ENCODE measurements at regions of chr19 and their contacts with region 1.

Region 1: GRCh38 chr19:38245826-38246498 is 10.2 kb downstream of the PPP1R14A start:
- DNase-seq: no peak
- H3K4me3 ChIP-seq: no peak overlapping the region
- CTCF ChIP-seq: no peak

Region 2: DNA sequence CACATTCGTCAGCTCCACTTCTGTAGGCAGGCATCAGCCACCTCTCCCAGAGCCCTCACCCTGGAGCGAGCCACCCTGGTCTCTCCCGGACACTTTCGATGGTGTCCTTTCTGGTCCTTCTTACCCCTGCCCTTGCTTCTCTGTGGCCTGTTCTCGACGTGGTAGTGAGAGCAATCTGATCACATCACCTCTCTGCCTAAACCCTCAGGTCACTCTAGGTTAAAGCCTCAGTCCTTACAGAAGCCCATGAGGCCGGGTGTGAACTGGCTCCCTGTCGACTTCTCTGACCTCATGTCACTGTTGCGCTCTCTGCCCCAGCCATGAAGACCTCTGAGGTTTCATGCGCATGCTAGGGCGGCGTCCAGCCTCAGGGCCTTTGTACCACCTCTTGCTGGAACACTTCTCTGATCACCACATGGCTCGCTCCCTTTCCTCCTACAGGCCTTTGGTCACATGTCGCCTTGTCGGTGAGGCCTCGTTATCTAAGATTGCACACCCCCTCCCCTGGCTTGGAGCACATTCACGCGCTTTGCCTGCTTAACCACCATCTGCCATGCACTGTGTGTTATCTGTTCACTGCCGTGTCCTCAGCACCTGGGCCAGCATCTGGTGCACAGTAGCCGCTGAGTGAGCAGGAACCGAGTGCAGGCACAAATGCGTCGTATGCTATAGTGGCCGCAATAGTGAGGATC is 123.4 kb before region 1 on chr19:
- CTCF ChIA-PET with region 1: no interaction called
- POLR2A ChIA-PET with region 1: no interaction called
- DNase-seq: no peak
- H3K4me3 ChIP-seq: no peak overlapping the region
- CTCF ChIP-seq: no peak

Region 3: DNA sequence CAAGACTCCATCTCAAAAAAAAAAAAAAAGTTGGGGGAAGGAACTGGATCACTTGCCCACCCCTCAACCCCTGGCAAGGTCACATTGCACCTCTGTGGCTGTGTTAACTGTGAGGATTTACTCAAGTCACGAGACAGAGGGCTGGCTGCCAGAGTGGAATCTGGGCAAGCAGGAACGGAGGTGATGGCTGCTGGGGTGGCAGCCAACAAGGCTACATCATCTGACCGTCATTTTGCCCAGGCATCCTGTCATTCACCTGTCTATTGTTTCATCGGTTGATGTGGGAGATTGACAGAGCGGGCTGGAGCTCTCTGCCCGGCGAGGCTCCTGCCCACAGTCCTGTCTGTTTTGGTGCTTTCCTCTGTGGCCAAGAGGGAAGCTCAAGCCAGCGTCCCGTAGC is 97.6 kb before region 1 on chr19:
- CTCF ChIA-PET with region 1: no interaction called
- POLR2A ChIA-PET with region 1: no interaction called
- DNase-seq: no peak
- H3K4me3 ChIP-seq: no peak overlapping the region
- CTCF ChIP-seq: no peak

Region 4: GRCh38 chr19:38229585-38230073 is 16.3 kb before region 1 on chr19:
- CTCF ChIA-PET with region 1: interaction called, 93 read pairs
- POLR2A ChIA-PET with region 1: no interaction called
- DNase-seq: no peak
- H3K4me3 ChIP-seq: peak overlapping the region; percentile 62
- CTCF ChIP-seq: peak; percentile 18

Region 5: DNA sequence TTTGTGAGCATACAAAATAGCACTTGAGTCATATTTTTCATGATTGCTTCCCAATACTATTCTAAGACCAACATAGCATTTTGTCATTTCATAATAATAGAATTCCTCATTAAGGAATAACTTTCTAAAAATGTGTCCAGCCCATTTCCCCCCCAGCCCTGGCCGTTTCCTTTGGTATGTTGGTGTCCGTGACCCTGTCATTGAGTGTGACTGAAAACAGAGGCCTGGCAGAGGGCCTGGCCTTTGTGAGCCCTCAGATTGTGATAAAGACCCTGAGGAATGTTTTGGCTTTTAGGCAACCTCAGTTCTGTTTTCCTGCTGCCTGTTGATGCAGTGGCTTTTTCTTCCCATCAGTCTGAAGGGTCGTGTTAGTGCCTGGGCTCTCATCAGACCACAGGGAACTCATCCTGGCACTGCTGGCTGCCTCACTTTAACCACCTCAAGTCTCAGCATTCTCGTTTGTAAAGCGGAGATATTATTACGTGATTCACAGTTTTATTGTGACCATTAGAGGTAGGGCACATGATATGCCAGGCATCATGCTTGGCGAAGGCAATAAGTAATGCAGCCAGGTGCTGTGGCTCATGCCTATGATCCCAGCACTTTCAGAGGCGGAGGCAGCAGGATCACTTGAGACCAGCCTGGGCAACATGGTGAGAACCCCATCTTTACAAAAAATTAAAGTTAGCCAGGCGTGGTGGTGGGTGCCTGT is 32.2 kb after region 1 on chr19:
- CTCF ChIA-PET with region 1: interaction called, 17 read pairs
- POLR2A ChIA-PET with region 1: no interaction called
- DNase-seq: no peak
- H3K4me3 ChIP-seq: no peak overlapping the region
- CTCF ChIP-seq: no peak

Region 6: DNA sequence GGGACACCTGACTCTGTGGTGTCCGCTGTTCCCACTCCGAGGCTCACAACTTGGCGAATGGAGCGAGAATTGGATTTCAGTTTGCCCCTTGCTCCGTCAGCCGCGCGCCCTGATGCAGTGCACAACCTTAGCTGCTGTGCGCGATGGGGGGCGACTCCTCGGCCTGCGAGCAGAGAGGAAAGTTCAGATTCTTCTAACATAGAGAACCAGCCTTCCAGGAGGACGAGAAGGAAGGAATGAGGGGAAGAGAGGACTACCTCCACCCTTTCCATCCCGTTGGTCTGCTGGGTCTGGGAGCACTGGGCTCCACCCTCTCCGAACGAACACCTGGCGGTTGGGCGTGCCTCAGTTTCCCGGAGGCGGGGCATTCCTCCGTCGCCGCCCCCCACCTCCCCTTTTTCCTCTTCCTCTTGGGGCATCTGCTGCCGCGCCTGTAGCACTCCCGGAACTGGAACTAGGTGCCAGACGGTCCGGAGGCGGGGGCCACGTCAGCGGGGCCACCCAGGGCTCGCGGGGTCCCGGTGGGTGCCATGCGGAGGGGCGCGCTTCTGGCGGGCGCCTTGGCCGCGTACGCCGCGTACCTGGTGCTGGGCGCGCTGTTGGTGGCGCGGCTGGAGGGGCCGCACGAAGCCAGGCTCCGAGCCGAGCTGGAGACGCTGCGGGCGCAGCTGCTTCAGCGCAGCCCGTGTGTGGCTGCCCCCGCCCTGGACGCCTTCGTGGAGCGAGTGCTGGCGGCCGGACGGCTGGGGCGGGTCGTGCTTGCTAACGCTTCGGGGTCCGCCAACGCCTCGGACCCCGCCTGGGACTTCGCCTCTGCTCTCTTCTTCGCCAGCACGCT is 73.7 kb after region 1 on chr19 and contains the start of gene KCNK6:
- CTCF ChIA-PET with region 1: interaction called, 16 read pairs
- POLR2A ChIA-PET with region 1: no interaction called
- DNase-seq: no peak
- H3K4me3 ChIP-seq: peak within 1 kb of the TSS; percentile 64
- CTCF ChIP-seq: no peak

Region 7: GRCh38 chr19:38374429-38375176 is 128.6 kb after region 1 on chr19 and contains the start of gene PSMD8:
- CTCF ChIA-PET with region 1: interaction called, 45 read pairs
- POLR2A ChIA-PET with region 1: interaction called, 4 read pairs
- DNase-seq: peak; percentile 86
- H3K4me3 ChIP-seq: peak within 1 kb of the TSS; percentile 83
- CTCF ChIP-seq: peak; percentile 36

Region 8: DNA sequence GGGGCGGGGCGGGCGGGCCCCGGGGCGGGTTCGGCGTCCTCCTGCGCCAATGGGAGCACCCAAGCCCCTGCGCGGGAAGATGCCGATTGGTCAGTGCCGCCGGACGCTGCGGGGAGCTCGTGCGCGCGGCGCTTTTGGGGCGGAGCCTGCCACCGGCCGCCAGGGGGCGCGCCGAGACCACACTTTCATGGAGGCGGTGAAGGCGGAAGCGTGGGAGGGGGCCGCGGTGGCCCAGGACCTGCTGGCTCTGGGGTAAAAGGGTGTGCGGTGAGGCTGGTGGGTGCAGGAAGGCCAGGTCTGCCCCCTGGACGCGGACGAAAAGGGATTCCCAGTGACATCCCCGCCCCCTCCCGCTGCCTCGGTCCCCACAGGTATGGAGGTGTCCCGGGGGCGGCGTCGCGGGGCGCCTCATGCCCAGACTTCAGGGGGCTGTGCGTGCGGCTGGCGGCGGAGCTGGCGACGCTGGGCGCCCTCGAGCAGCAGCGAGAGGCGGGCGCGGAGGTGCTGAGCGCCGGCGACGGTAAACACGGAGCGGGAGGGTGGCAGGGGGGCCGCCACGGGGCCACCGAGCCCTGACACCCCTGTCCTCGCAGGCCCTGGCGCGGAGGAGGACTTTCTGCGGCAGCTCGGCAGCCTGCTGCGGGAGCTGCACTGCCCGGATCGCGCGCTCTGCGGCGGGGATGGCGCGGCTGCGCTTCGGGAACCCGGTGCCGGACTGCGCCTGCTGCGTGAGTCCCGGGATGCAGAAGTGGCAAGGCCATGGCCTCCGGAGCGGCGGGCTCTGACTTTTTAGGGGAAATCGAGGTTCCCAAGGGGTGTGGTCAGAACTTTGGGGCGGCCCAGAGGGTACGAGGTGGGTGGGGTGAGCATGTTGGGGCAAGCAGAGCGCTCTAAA is 157.3 kb after region 1 on chr19 and contains the start of gene FAM98C:
- CTCF ChIA-PET with region 1: interaction called, 12 read pairs
- POLR2A ChIA-PET with region 1: no interaction called
- DNase-seq: peak; percentile 46
- H3K4me3 ChIP-seq: peak within 1 kb of the TSS; percentile 95
- CTCF ChIP-seq: peak; percentile 90